ENCODE measurements at regions of chr4 and their contacts with region 1.

Region 1: DNA sequence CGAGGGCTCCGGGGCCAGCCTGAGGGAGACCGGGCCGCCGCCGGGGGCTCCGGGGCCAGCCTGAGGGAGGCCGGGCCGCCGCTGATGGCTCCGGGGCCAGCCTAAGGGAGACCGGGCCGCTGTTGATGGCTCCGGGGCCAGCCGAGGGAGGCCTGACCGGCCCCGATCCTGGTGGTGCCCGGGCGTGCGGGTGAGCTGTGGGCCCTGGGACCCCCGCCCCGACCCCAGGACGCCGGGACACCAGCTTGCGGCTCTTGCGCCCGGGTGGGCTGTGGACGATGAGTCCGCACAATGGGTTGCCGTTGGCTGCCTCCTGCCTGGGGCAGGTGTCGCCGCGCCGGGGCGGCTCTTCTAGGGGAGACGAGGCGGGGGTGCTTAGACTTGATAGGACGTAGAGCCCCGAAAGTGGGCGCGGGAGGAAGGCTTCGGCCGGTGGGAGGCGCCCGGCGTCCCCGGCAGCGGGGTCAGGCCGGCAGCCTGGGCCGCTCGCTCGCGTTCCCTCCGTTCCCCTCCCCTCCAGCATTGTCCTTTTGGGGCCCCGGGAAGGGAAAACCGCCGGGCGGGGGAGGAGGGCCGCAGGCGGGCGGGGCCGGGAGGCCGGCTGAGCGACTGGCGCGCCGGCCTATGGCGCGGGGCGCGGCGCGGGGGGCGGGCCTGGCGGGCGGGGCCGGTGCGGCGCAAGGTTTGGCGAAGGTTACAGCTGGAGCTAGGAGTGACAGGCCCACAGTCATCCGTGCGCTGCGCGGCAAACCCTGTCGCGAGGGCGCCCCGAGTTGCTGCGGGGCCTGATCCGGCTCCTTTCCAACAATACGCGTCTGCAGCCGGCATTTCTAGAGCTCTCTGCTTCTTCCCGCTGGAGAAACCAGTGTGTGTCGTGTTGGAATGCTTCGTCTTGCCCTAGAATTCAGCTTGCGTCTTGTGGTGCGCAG is 790 bp downstream of the KIAA0232 start:
- DNase-seq: peak; percentile 79 to 93 (median 87)
- ATAC-seq: peak; percentile 72
- H3K4me3 ChIP-seq: peak overlapping the region; percentile 72 to 93
- H3K4me3 Mint-ChIP-seq: peak overlapping the region; percentile 89
- H3K27ac ChIP-seq: peak overlapping the region; percentile 76 to 94
- H3K27ac Mint-ChIP-seq: peak overlapping the region; percentile 84
- H3K4me1 ChIP-seq: peaks cover 63% of the 10 kb centered on the region
- H3K4me1 Mint-ChIP-seq: peaks cover 70% of the 10 kb centered on the region
- H3K27me3 ChIP-seq: no peaks in the 10 kb centered on the region
- H3K27me3 Mint-ChIP-seq: no peaks in the 10 kb centered on the region
- CTCF ChIP-seq: no peak

Region 2: DNA sequence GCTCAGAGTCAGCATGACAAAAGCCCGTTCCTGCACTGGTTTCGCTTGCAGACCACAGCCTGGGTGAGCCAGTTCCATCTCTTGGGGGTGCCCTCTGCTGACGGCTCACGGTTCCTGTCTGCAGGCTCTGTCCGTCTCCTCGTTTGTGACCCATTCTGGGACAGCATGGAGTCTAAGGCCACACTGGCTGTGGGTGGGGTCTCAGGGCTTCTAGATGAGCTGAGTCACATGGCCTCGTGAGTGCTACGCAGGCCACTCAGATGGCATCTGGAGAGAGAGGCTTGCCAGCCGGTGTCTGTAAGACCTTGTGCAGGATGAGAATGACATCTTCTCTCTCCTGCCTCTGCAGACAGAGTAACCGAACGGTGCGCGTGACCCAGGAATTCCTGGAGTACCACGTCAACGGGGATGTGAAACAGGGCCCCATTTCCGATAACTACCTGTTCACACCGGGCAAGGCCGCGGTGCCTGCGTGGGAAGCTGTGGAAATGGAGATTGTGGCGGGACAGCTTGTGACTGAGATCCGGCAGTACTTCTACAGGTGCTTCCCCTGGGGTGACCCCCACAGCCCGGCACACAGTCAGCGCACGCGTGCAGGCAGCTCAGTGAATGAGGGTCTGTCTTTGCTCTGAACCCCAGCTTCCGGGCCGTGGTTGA is 174.4 kb before region 1 on chr4:
- CTCF ChIA-PET with region 1: no interaction called
- POLR2A ChIA-PET with region 1: no interaction called
- intact Hi-C with region 1: no loop called
- DNase-seq: peak in 3 of 9 experiments; percentile 41 to 62 (median 52)
- ATAC-seq: peak; percentile 46
- H3K4me3 ChIP-seq: no peak overlapping the region
- H3K4me3 Mint-ChIP-seq: no peak overlapping the region
- H3K27ac ChIP-seq: no peak overlapping the region
- H3K27ac Mint-ChIP-seq: peak overlapping the region; percentile 52
- H3K4me1 ChIP-seq: no peaks in the 10 kb centered on the region
- H3K4me1 Mint-ChIP-seq: peaks cover 3% of the 10 kb centered on the region
- H3K27me3 ChIP-seq: no peaks in the 10 kb centered on the region
- H3K27me3 Mint-ChIP-seq: no peaks in the 10 kb centered on the region
- CTCF ChIP-seq: no peak

Region 3: DNA sequence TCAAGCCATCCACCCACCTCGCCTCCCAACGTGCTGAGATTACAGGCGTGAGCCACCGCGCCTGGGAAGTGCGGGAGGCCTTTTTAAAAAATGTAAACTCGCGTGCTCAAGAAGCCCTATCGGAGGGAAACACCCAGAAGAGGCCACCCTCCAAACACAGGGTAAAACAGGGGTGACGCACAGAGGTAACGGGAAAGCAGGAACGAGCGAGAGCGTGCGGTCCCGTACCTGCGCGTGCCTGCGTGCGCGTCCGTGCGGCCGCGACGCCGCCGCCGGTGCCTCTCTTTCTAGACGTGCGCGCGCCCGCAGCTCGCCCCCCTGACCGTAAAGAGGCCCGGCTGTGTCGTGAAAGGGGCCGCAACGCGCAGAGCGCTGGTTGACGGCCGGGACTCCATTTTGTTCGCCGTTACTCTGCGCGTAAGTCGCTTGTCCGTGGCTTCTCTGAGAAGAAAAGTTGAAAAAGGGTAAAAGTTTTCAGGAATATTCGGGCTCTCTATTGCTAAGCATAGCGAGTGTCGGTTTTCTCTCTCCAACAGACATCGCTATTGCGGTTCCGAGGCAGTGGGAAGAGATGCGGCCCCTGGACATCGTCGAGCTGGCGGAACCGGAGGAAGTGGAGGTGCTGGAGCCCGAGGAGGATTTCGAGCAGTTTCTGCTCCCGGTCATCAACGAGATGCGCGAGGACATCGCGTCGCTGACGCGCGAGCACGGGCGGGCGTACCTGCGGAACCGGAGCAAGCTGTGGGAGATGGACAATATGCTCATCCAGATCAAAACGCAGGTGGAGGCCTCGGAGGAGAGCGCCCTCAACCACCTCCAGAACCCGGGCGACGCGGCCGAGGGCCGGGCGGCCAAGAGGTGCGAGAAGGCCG is 142.8 kb before region 1 on chr4 and contains the start of gene MRFAP1:
- CTCF ChIA-PET with region 1: no interaction called
- POLR2A ChIA-PET with region 1: interaction called, 7 read pairs
- intact Hi-C with region 1: loop called (anchors 1 to 2 kb)
- DNase-seq: peak; percentile 90 to 98 (median 95)
- ATAC-seq: peak; percentile 79
- H3K4me3 ChIP-seq: peak within 1 kb of the TSS; percentile 96 to 97
- H3K4me3 Mint-ChIP-seq: peak within 1 kb of the TSS; percentile 99
- H3K27ac ChIP-seq: peak within 1 kb of the TSS; percentile 96
- H3K27ac Mint-ChIP-seq: peak within 1 kb of the TSS; percentile 99
- H3K4me1 ChIP-seq: peaks cover 17% of the 10 kb centered on the region
- H3K4me1 Mint-ChIP-seq: peaks cover 41% of the 10 kb centered on the region
- H3K27me3 ChIP-seq: no peaks in the 10 kb centered on the region
- H3K27me3 Mint-ChIP-seq: no peaks in the 10 kb centered on the region
- CTCF ChIP-seq: no peak
- total RNA-seq, gene MRFAP1: 177 to 183 TPM

Region 4: GRCh38 chr4:6716018-6716911 is 67.1 kb before region 1 on chr4 and contains the start of gene BLOC1S4:
- CTCF ChIA-PET with region 1: interaction called, 41 read pairs
- POLR2A ChIA-PET with region 1: interaction called, 11 read pairs
- intact Hi-C with region 1: loop called (anchors 1 kb)
- DNase-seq: peak; percentile 77 to 98 (median 88)
- ATAC-seq: peak; percentile 83
- H3K4me3 ChIP-seq: peak within 1 kb of the TSS; percentile 74 to 81
- H3K4me3 Mint-ChIP-seq: peak within 1 kb of the TSS; percentile 95
- H3K27ac ChIP-seq: peak within 1 kb of the TSS; percentile 75 to 80
- H3K27ac Mint-ChIP-seq: peak within 1 kb of the TSS; percentile 97
- H3K4me1 ChIP-seq: peaks cover 25% of the 10 kb centered on the region
- H3K4me1 Mint-ChIP-seq: peaks cover 48% of the 10 kb centered on the region
- H3K27me3 ChIP-seq: no peaks in the 10 kb centered on the region
- H3K27me3 Mint-ChIP-seq: no peaks in the 10 kb centered on the region
- CTCF ChIP-seq: peak; percentile 18
- total RNA-seq, gene BLOC1S4: 29.7 to 30.7 TPM

Region 5: GRCh38 chr4:6768539-6768905 is 14.8 kb before region 1 on chr4:
- CTCF ChIA-PET with region 1: interaction called, 10 read pairs
- POLR2A ChIA-PET with region 1: interaction called, 10 read pairs
- intact Hi-C with region 1: no loop called
- DNase-seq: no peak
- ATAC-seq: no peak
- H3K4me3 ChIP-seq: peak overlapping the region in 1 of 2 experiments; percentile 34
- H3K4me3 Mint-ChIP-seq: no peak overlapping the region
- H3K27ac ChIP-seq: no peak overlapping the region
- H3K27ac Mint-ChIP-seq: no peak overlapping the region
- H3K4me1 ChIP-seq: peaks cover 30% of the 10 kb centered on the region
- H3K4me1 Mint-ChIP-seq: peaks cover 46% of the 10 kb centered on the region
- H3K27me3 ChIP-seq: no peaks in the 10 kb centered on the region
- H3K27me3 Mint-ChIP-seq: no peaks in the 10 kb centered on the region
- CTCF ChIP-seq: no peak

Region 6: GRCh38 chr4:6794189-6794588 is 10.9 kb after region 1 on chr4:
- CTCF ChIA-PET with region 1: no interaction called
- POLR2A ChIA-PET with region 1: no interaction called
- intact Hi-C with region 1: no loop called
- DNase-seq: no peak
- ATAC-seq: no peak
- H3K4me3 ChIP-seq: no peak overlapping the region
- H3K4me3 Mint-ChIP-seq: no peak overlapping the region
- H3K27ac ChIP-seq: no peak overlapping the region
- H3K27ac Mint-ChIP-seq: peak overlapping the region; percentile 27
- H3K4me1 ChIP-seq: peaks cover 33% of the 10 kb centered on the region
- H3K4me1 Mint-ChIP-seq: peaks cover 75% of the 10 kb centered on the region
- H3K27me3 ChIP-seq: no peaks in the 10 kb centered on the region
- H3K27me3 Mint-ChIP-seq: no peaks in the 10 kb centered on the region
- CTCF ChIP-seq: no peak

Region 7: GRCh38 chr4:6909073-6909965 is 126.0 kb after region 1 on chr4 and contains the start of gene TBC1D14:
- CTCF ChIA-PET with region 1: no interaction called
- POLR2A ChIA-PET with region 1: no interaction called
- intact Hi-C with region 1: loop called (anchors 1 to 2 kb)
- DNase-seq: peak; percentile 72 to 94 (median 84)
- ATAC-seq: peak; percentile 85
- H3K4me3 ChIP-seq: peak within 1 kb of the TSS; percentile 78 to 80
- H3K4me3 Mint-ChIP-seq: peak within 1 kb of the TSS; percentile 92
- H3K27ac ChIP-seq: peak within 1 kb of the TSS; percentile 81 to 98
- H3K27ac Mint-ChIP-seq: peak within 1 kb of the TSS; percentile 91
- H3K4me1 ChIP-seq: peaks cover 37% of the 10 kb centered on the region
- H3K4me1 Mint-ChIP-seq: peaks cover 53% of the 10 kb centered on the region
- H3K27me3 ChIP-seq: no peaks in the 10 kb centered on the region
- H3K27me3 Mint-ChIP-seq: no peaks in the 10 kb centered on the region
- CTCF ChIP-seq: no peak
- total RNA-seq, gene TBC1D14: 29.2 to 30.9 TPM

Region 8: GRCh38 chr4:7017446-7018330 is 234.4 kb after region 1 on chr4:
- CTCF ChIA-PET with region 1: no interaction called
- POLR2A ChIA-PET with region 1: no interaction called
- intact Hi-C with region 1: no loop called
- DNase-seq: no peak
- ATAC-seq: no peak
- H3K4me3 ChIP-seq: no peak overlapping the region
- H3K4me3 Mint-ChIP-seq: no peak overlapping the region
- H3K27ac ChIP-seq: no peak overlapping the region
- H3K27ac Mint-ChIP-seq: no peak overlapping the region
- H3K4me1 ChIP-seq: no peaks in the 10 kb centered on the region
- H3K4me1 Mint-ChIP-seq: no peaks in the 10 kb centered on the region
- H3K27me3 ChIP-seq: no peaks in the 10 kb centered on the region
- H3K27me3 Mint-ChIP-seq: no peaks in the 10 kb centered on the region
- CTCF ChIP-seq: no peak

Region 9: GRCh38 chr4:7042697-7043464 is 259.6 kb after region 1 on chr4 and contains the start of gene TADA2B:
- CTCF ChIA-PET with region 1: interaction called, 3 read pairs
- POLR2A ChIA-PET with region 1: no interaction called
- intact Hi-C with region 1: loop called (anchors 2 kb)
- DNase-seq: peak; percentile 74 to 95 (median 89)
- ATAC-seq: peak; percentile 76
- H3K4me3 ChIP-seq: peak within 1 kb of the TSS; percentile 83 to 94
- H3K4me3 Mint-ChIP-seq: peak within 1 kb of the TSS; percentile 91
- H3K27ac ChIP-seq: peak within 1 kb of the TSS; percentile 63 to 84
- H3K27ac Mint-ChIP-seq: peak within 1 kb of the TSS; percentile 88
- H3K4me1 ChIP-seq: peaks cover 40% of the 10 kb centered on the region
- H3K4me1 Mint-ChIP-seq: peaks cover 44% of the 10 kb centered on the region
- H3K27me3 ChIP-seq: no peaks in the 10 kb centered on the region
- H3K27me3 Mint-ChIP-seq: no peaks in the 10 kb centered on the region
- CTCF ChIP-seq: no peak
- total RNA-seq, gene TADA2B: 41.9 to 45.4 TPM

Region 10: GRCh38 chr4:7939377-7940108 is 1156.2 kb after region 1 on chr4 and contains the start of gene AFAP1:
- CTCF ChIA-PET with region 1: no interaction called
- POLR2A ChIA-PET with region 1: no interaction called
- intact Hi-C with region 1: loop called in 1 of 2 experiments (anchors 10 kb)
- DNase-seq: peak; percentile 75 to 94 (median 87)
- ATAC-seq: peak; percentile 90
- H3K4me3 ChIP-seq: peak within 1 kb of the TSS; percentile 63 to 70
- H3K4me3 Mint-ChIP-seq: peak within 1 kb of the TSS; percentile 75
- H3K27ac ChIP-seq: peak within 1 kb of the TSS in 1 of 2 experiments; percentile 62
- H3K27ac Mint-ChIP-seq: no peak within 1 kb of the TSS
- H3K4me1 ChIP-seq: peaks cover 9% of the 10 kb centered on the region
- H3K4me1 Mint-ChIP-seq: peaks cover 26% of the 10 kb centered on the region
- H3K27me3 ChIP-seq: peaks cover 0 to 5% of the 10 kb centered on the region in 2 experiments
- H3K27me3 Mint-ChIP-seq: no peaks in the 10 kb centered on the region
- CTCF ChIP-seq: no peak
- total RNA-seq, gene AFAP1: 13.4 to 13.9 TPM

Measured in CD8-positive, alpha-beta T cell (primary cell).